HEK293T (cell line): ENCODE measurements at regions of chr6 and their contacts with region 1.

Region 1: DNA sequence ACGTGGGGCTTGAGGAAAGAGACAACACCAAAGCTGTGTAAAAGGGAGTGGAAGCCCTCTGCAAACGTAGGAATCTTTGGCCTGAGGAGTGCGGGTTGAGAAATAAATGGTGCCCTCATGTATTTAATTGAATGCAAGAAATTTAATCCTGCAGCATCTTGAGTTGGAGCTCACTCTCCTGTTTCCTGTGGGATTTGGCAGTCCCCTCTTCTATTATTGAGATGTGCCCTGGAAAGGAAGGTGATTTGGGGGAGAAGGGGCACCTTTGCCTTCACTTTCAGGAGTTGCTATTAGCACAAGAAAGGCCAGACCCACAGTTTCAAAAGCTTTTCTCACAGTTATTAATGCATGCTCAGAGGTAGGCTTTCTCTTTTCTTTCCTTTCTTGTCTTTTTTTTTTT is 201.4 kb upstream of the HDDC2 start:
- DNase-seq: no peak

Region 2: GRCh38 chr6:125262016-125263013 is 240.9 kb before region 1 on chr6:
- CTCF ChIA-PET with region 1: no interaction called
- POLR2A ChIA-PET with region 1: no interaction called
- DNase-seq: no peak

Region 3: DNA sequence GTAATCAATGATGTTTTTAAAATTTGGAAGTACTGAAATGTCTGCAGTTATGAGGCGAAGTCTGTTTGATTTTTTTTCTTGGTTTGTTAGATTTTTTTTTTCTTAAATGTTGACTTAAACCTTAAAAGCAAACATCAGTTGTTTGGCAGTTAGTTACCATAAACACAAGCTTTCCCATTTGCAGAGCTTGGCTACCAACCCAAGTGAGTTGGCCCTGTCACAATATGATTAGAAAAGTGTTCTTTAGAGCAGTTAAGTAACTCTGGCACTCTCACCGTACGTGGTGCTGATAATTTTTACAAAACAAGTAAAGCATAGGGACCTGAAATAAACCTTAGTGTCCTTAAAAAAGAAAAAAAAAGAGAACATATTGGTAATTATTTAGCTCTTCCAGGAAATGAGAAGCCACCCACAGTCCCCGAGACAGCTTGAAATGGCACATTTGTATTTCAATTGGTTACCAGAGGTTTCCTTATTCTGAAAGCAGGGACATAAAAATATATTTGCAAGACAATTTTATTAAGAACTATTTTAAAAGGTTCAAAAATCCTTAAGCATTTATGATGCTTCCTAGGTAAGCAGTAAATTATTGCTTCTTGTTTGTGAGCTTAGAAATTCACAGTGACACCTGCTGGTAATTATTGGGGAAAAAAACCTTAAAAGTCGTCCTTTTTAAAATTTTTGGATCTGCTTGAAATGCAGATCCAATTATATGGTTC is 250.2 kb after region 1 on chr6:
- CTCF ChIA-PET with region 1: interaction called, 11 read pairs
- POLR2A ChIA-PET with region 1: no interaction called
- DNase-seq: no peak